ENCODE measurements at regions of chr6 and their contacts with region 1.

Region 1: GRCh38 chr6:3356056-3356761 is 97.5 kb downstream of the PSMG4 start:
- DNase-seq: peak; percentile 77 to 93 (median 87)
- H3K4me3 ChIP-seq: peak overlapping the region; percentile 42 to 74 (median 52)
- H3K4me3 Mint-ChIP-seq: peak overlapping the region; percentile 86 to 88
- H3K27ac ChIP-seq: peak overlapping the region; percentile 76 to 94
- H3K27ac Mint-ChIP-seq: peak overlapping the region; percentile 84 to 97 (median 94)
- H3K4me1 ChIP-seq: peaks cover 30 to 34% of the 10 kb centered on the region in 2 donors
- H3K4me1 Mint-ChIP-seq: peaks cover 25% of the 10 kb centered on the region
- H3K27me3 ChIP-seq: no peaks in the 10 kb centered on the region
- H3K27me3 Mint-ChIP-seq: peaks cover 4 to 8% (median 6%) of the 10 kb centered on the region in 3 donors
- CTCF ChIP-seq: no peak

Region 2: DNA sequence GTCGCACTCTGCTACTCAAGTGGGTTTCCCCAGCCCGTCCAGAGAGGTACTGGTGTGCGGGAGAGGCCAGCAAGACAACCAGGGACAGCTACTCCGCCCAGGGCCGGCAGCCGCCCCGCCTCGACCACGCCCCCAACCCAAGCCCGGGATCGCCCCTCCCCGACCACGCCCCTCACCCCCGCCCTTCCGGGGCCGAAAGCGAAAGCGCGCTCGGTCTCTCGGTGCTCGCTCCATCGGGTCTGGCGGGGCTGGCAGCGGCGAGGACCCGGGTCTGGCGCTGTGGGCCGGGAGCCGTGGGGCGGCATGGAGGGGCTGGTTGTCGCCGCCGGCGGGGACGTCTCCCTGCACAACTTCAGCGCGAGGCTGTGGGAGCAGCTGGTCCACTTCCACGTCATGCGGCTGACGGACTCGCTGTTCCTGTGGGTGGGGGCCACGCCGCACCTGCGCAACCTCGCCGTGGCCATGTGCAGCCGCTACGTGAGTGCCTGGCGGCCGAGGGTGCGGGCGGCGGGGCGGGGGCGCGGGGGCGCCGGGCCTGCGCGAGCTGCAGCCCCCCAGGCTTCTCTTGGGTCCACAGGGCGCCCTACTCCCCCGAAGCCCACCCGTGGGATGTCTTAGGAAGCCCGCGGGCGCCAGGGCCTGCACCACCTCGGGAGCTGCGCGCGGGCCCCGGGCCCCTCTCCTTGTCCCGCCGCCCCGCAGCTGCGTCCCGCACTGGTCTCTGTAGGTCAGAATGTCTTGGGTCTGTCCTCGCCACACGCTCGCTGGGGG is 97.3 kb before region 1 on chr6 and contains the start of gene PSMG4:
- intact Hi-C with region 1: loop called in 1 of 2 experiments (anchors 5 kb)
- DNase-seq: peak; percentile 79 to 90 (median 89)
- H3K4me3 ChIP-seq: peak within 1 kb of the TSS; percentile 71 to 91 (median 79)
- H3K4me3 Mint-ChIP-seq: peak within 1 kb of the TSS; percentile 99 to 100
- H3K27ac ChIP-seq: peak within 1 kb of the TSS; percentile 31 to 71
- H3K27ac Mint-ChIP-seq: peak within 1 kb of the TSS; percentile 74 to 93 (median 85)
- H3K4me1 ChIP-seq: peaks cover 19 to 23% of the 10 kb centered on the region in 2 donors
- H3K4me1 Mint-ChIP-seq: peaks cover 30% of the 10 kb centered on the region
- H3K27me3 ChIP-seq: peaks cover 0 to 18% of the 10 kb centered on the region in 2 donors
- H3K27me3 Mint-ChIP-seq: peaks cover 13 to 21% (median 18%) of the 10 kb centered on the region in 3 donors
- CTCF ChIP-seq: no peak
- polyA plus RNA-seq, gene PSMG4: 23.6 to 31.1 (median 27.9) TPM

Region 3: DNA sequence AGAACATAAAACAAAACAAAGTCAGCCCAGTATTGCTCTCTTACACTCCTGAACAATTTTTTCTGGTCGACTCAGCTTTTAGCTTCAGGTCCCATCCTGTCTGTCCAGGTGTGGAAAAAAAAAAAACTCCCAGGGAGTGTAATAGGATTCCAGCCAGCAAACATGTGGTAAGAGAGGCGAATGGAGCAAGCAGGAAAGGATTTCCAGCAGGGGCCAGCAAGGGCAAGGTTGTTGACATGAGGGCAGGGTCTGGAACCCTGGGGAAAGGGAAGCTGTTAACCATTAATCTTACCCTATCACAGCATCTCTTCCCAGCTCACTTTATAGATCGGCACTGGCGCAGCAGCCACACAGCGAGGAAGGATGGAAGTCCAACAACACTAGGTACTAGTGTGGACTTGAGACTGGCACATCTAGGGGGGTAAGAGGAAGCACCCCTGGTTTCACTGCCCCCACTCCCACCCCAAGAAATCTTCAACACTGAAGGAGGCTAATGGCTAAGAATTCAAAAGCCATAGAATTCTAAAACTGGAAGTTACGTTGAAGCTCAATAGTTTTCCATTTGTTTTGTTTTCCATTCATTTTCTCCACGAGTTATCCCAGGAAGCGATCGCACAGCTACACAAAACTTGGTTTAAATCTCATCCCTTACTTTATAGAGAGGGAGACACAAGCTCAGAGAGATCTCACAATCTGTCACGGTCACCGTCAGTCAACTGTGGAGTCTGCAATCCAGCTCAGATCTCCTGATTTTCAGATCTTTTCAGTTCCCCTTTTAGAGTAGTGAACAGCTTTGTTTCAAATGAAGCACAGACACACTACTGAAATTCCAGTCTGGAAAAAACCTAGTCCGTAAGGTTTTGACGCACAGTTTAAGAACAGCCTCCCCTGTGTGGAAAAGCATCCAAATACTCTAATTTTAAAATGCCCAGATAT is 47.3 kb after region 1 on chr6:
- intact Hi-C with region 1: no loop called
- DNase-seq: no peak
- H3K4me3 ChIP-seq: no peak overlapping the region
- H3K4me3 Mint-ChIP-seq: peak overlapping the region; percentile 38 to 47
- H3K27ac ChIP-seq: no peak overlapping the region
- H3K27ac Mint-ChIP-seq: no peak overlapping the region
- H3K4me1 ChIP-seq: no peaks in the 10 kb centered on the region
- H3K4me1 Mint-ChIP-seq: peaks cover 5% of the 10 kb centered on the region
- H3K27me3 ChIP-seq: no peaks in the 10 kb centered on the region
- H3K27me3 Mint-ChIP-seq: peaks cover 2 to 4% (median 4%) of the 10 kb centered on the region in 3 donors
- CTCF ChIP-seq: no peak

Region 4: DNA sequence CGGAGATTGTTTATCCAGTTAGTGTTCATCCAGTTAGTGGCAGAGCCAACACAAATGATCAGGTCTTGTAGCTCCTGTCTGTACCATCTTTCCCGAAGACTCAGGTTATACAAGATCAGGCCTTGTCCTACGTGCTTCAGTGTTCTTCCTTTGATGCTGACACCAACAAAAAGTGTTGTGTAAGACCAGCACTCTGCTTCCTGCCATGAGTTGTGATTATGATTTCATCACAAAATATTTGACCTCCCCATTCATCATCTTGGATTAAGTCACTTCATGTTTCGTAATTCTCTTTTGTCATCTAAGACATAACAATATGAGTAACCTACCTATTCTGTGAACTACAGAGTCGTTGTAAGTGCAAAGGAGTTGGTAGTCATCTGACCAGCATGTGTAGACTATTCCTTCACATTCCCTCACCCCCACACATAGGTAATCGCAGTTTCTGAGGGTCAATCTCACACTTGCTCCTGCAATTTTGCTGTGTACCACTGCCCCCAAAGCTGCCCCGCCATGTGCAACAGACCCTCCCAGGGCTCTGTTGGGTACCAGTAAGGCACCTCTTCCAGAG is 236.2 kb after region 1 on chr6:
- intact Hi-C with region 1: loop called in 1 of 2 experiments (anchors 10 kb)
- DNase-seq: peak; percentile 85 to 95 (median 94)
- H3K4me3 ChIP-seq: no peak overlapping the region
- H3K4me3 Mint-ChIP-seq: no peak overlapping the region
- H3K27ac ChIP-seq: peak overlapping the region; percentile 46 to 74
- H3K27ac Mint-ChIP-seq: peak overlapping the region; percentile 66 to 91 (median 85)
- H3K4me1 ChIP-seq: peaks cover 9 to 14% of the 10 kb centered on the region in 2 donors
- H3K4me1 Mint-ChIP-seq: peaks cover 20% of the 10 kb centered on the region
- H3K27me3 ChIP-seq: no peaks in the 10 kb centered on the region
- H3K27me3 Mint-ChIP-seq: peaks cover 0 to 3% (median 0%) of the 10 kb centered on the region in 3 donors
- CTCF ChIP-seq: no peak